ENCODE measurements at regions of chr5 and their contacts with region 1.

Region 1: DNA sequence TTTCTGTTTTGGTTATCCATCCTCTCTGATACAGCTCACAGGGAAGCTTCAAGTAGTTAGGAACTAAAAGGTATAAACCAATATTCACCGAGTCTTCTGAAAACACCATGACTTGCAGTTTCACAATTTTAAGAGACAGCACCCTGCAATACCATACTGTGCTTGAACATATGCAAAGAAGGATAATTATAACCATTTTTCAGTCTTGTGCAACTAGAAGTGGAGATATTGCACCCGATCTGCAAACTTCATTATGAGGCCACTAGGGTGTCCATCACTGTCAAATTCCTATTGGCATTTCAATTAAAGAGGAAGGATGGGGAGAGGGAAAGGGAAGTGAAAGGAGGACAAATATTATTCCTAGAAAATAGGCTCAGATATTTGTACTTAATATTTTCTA is 32.4 kb upstream of the CEP120 start:
- DNase-seq: no peak
- ATAC-seq: peak; percentile 75
- H3K4me3 ChIP-seq: no peak overlapping the region
- H3K27ac ChIP-seq: peak overlapping the region; percentile 57; the same call in 1 of the 2 replicates
- H3K4me1 ChIP-seq: peaks cover 18% of the 10 kb centered on the region
- H3K27me3 ChIP-seq: no peaks in the 10 kb centered on the region
- CTCF ChIP-seq: peak in 2 of 3 experiments; percentile 26 to 44; a peak in 3 of 6 replicates
- EP300 ChIP-seq: no peak
- POLR2A ChIP-seq: no peak
- RAD21 ChIP-seq: no peak

Region 2: DNA sequence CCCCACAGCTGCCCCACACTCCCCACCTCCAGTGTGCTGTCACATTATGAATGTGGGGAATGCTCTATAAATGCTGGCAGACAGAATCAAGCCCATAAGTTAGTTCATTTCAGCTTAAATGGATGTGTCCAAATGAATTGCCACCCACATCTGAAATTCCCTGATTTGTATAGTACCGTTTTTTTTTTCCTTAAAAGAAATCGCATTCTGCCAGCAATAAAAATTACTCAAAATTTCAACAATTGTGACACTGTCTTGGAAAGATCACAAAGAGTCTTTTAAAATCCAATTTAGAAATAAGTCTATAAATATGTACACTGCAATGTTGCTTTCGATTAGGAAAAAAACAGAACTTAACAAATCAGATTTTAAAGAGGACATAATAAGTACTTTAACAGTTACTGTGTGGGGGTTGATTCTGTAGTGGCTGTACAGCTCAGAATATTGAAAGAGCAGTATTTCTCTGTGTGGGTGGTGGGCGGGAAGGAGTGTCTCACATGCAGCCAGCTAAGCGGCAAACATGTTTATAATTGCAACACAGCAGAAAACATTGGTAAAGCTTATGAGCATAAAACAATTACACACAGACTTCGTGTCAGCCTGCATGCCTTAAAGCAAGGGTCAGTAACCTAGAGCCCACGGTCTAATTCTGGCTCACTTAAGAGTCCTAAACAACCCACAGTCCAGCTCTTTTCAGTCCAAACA is 31.5 kb after region 1 on chr5:
- CTCF ChIA-PET with region 1: interaction called, 3 read pairs
- POLR2A ChIA-PET with region 1: no interaction called
- RAD21 ChIA-PET with region 1: no interaction called
- SMC1A ChIA-PET with region 1: interaction called, 11 read pairs
- in situ Hi-C with region 1: no loop called
- intact Hi-C with region 1: no loop called
- DNase-seq: no peak
- ATAC-seq: no peak
- H3K4me3 ChIP-seq: no peak overlapping the region
- H3K27ac ChIP-seq: no peak overlapping the region
- H3K4me1 ChIP-seq: no peaks in the 10 kb centered on the region
- H3K27me3 ChIP-seq: no peaks in the 10 kb centered on the region; a peak in 1 of 4 replicates
- CTCF ChIP-seq: no peak
- EP300 ChIP-seq: no peak
- POLR2A ChIP-seq: no peak
- RAD21 ChIP-seq: no peak

Region 3: DNA sequence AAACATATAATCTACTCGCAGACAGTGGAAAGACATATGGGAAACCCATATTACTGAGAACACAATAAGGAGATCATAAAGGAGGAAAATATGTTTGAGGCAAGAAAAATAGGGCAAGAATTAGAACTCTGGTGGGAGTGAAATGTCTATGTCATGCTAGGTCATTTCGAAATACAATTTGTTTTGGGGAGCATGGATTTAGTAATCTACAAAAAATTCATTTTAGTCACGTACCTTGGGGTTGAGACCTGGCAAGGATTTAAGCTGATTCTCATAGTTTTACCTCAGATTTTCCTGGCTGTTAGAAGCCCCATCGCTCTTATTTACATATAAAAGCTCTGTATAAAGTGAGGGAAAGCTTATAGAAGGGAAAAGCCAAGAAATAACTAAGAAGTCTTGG is 44.8 kb after region 1 on chr5:
- CTCF ChIA-PET with region 1: no interaction called
- POLR2A ChIA-PET with region 1: no interaction called
- RAD21 ChIA-PET with region 1: no interaction called
- SMC1A ChIA-PET with region 1: no interaction called
- in situ Hi-C with region 1: no loop called
- intact Hi-C with region 1: loop called (anchors 5 kb)
- DNase-seq: no peak
- ATAC-seq: no peak
- H3K4me3 ChIP-seq: no peak overlapping the region
- H3K27ac ChIP-seq: no peak overlapping the region
- H3K4me1 ChIP-seq: no peaks in the 10 kb centered on the region
- H3K27me3 ChIP-seq: no peaks in the 10 kb centered on the region
- CTCF ChIP-seq: no peak
- EP300 ChIP-seq: no peak
- POLR2A ChIP-seq: no peak
- RAD21 ChIP-seq: no peak

Region 4: GRCh38 chr5:123624132-123624531 is 168.5 kb after region 1 on chr5:
- CTCF ChIA-PET with region 1: no interaction called
- POLR2A ChIA-PET with region 1: no interaction called
- RAD21 ChIA-PET with region 1: no interaction called
- SMC1A ChIA-PET with region 1: no interaction called
- in situ Hi-C with region 1: no loop called
- intact Hi-C with region 1: no loop called
- DNase-seq: no peak
- ATAC-seq: no peak
- H3K4me3 ChIP-seq: no peak overlapping the region
- H3K27ac ChIP-seq: no peak overlapping the region
- H3K4me1 ChIP-seq: no peaks in the 10 kb centered on the region
- H3K27me3 ChIP-seq: no peaks in the 10 kb centered on the region
- CTCF ChIP-seq: no peak
- EP300 ChIP-seq: no peak
- POLR2A ChIP-seq: no peak
- RAD21 ChIP-seq: no peak

Region 5: DNA sequence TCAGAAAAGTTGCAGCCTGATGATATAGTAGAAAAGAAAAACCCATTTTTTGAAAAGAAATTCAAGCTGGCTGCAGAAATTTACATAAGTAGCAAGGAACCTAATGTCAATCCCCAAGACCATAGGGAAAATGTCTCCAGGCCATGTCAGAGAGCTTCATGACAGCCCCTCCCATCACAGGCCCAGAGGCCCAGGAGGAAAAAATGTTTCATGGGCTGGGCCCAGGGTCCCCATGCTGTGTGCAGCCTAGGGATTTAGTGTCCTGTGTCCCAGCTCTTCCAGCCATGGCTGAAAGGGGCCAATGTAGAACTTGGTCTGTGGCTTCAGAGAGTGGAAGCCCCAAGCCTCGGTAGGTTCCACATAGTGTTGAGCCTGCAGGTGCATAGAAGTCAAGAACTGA is 276.6 kb after region 1 on chr5:
- CTCF ChIA-PET with region 1: no interaction called
- POLR2A ChIA-PET with region 1: no interaction called
- RAD21 ChIA-PET with region 1: no interaction called
- SMC1A ChIA-PET with region 1: no interaction called
- in situ Hi-C with region 1: no loop called
- intact Hi-C with region 1: no loop called
- DNase-seq: no peak
- ATAC-seq: no peak
- H3K4me3 ChIP-seq: no peak overlapping the region
- H3K27ac ChIP-seq: no peak overlapping the region
- H3K4me1 ChIP-seq: no peaks in the 10 kb centered on the region
- H3K27me3 ChIP-seq: no peaks in the 10 kb centered on the region
- CTCF ChIP-seq: no peak
- EP300 ChIP-seq: no peak
- POLR2A ChIP-seq: no peak
- RAD21 ChIP-seq: no peak